ENCODE measurements at regions of chr15 and their contacts with region 1.

Region 1: GRCh38 chr15:99104788-99105513 is at the start of gene SYNM:
- DNase-seq: peak in 1 of 2 experiments; percentile 87
- H3K4me3 ChIP-seq: peak within 1 kb of the TSS; percentile 14 to 57 (median 38)
- H3K27ac ChIP-seq: no peak within 1 kb of the TSS
- H3K4me1 ChIP-seq: peaks cover 0 to 2% (median 1%) of the 10 kb centered on the region in 4 experiments; a peak in 2 of 7 replicates
- H3K27me3 ChIP-seq: peaks cover 16 to 44% (median 32%) of the 10 kb centered on the region in 4 experiments
- CTCF ChIP-seq: peak; percentile 77 to 97 (median 85)
- EP300 ChIP-seq: peak in 1 of 2 experiments; percentile 29; a peak in 1 of 3 replicates
- POLR2A ChIP-seq: peak in 1 of 2 experiments; percentile 41; a peak in 1 of 3 replicates
- RAD21 ChIP-seq: peak; percentile 58 to 87
- total RNA-seq, gene SYNM: 2.0 and 2.2 TPM in 2 replicates

Region 2: DNA sequence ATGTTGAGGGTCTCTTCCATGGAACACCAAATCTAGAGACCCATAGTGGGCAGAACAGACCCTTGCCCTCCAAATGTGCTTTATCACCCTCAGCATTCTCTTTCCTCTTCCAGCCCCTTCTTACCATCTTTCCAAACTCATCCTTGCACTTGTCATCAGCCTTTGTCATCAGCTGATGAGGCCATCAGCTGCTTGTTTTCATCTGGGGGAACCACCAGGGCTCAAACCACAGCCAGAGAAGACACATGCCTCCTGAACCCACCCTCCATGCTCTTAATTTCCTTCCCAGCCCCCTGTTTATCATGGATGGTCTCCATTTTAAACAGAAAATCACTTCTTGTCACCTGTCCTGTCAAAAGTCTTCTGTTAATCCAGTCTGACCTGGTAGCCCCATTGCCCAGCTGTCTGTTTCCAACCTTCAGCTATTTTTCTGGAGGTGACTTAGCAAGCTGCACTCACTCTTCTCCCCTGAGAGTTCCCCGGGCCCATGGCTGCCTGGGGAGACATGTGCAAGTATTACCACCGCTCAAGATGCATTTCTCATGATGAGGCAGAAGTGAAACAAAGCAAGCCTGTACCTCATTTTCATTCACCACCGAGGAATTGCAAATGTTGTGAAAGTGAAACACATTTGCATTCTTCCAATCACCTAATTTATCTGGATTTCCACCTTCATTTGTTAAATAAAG is 14.8 kb before region 1 on chr15:
- CTCF ChIA-PET with region 1: interaction called, 25 read pairs
- POLR2A ChIA-PET with region 1: no interaction called
- DNase-seq: no peak
- H3K4me3 ChIP-seq: 0 out of 8 replicates have a peak overlapping the region, but pooled peaks of 1 of the 4 experiments have one; percentile 8
- H3K27ac ChIP-seq: no peak overlapping the region; the same call in 1 of the 2 replicates
- H3K4me1 ChIP-seq: peaks cover 0 to 5% (median 3%) of the 10 kb centered on the region in 4 experiments; a peak in 4 of 7 replicates
- H3K27me3 ChIP-seq: no peaks in the 10 kb centered on the region
- CTCF ChIP-seq: no peak
- EP300 ChIP-seq: no peak
- POLR2A ChIP-seq: no peak
- RAD21 ChIP-seq: no peak

Region 3: GRCh38 chr15:99130314-99130713 is 25.4 kb after region 1 on chr15:
- CTCF ChIA-PET with region 1: interaction called, 10 read pairs
- POLR2A ChIA-PET with region 1: no interaction called
- DNase-seq: no peak
- H3K4me3 ChIP-seq: no peak overlapping the region
- H3K27ac ChIP-seq: no peak overlapping the region
- H3K4me1 ChIP-seq: peaks cover 0 to 3% (median 0%) of the 10 kb centered on the region in 4 experiments; a peak in 1 of 7 replicates
- H3K27me3 ChIP-seq: no peaks in the 10 kb centered on the region
- CTCF ChIP-seq: no peak
- EP300 ChIP-seq: no peak
- POLR2A ChIP-seq: no peak
- RAD21 ChIP-seq: no peak

Region 4: DNA sequence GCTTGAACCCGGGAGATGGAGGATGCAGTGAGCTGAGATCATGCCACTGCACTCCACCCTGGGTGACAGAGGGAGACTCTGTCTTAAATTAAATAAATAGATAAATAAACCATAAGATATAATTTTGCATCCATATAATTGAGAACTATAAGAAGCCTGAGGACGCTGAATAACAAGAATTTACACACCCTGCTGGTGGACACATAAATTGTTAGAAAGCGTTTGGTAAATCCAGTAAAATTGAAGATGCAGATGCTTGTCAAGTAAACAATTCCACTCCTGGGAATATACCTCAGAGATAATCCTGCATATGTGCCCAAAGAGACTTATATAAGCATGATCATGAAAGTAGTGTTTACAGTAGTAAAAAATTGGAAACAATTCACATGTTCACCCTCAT is 102.7 kb after region 1 on chr15:
- CTCF ChIA-PET with region 1: interaction called, 114 read pairs
- POLR2A ChIA-PET with region 1: no interaction called
- DNase-seq: no peak
- H3K4me3 ChIP-seq: no peak overlapping the region
- H3K27ac ChIP-seq: no peak overlapping the region
- H3K4me1 ChIP-seq: no peaks in the 10 kb centered on the region
- H3K27me3 ChIP-seq: no peaks in the 10 kb centered on the region
- CTCF ChIP-seq: no peak
- EP300 ChIP-seq: no peak
- POLR2A ChIP-seq: no peak
- RAD21 ChIP-seq: no peak

Measured in H1 (cell line).